ENCODE measurements at regions of chr1 and their contacts with region 1.

Region 1: GRCh38 chr1:6108937-6109614 is 63.4 kb downstream of the KCNAB2 start:
- DNase-seq: peak in 1 of 2 experiments; percentile 41
- H3K4me3 ChIP-seq: no peak overlapping the region
- H3K27ac ChIP-seq: no peak overlapping the region
- H3K4me1 ChIP-seq: peaks cover 0 to 4% (median 3%) of the 10 kb centered on the region in 4 experiments; a peak in 2 of 7 replicates
- H3K27me3 ChIP-seq: no peaks in the 10 kb centered on the region; a peak in 1 of 7 replicates
- CTCF ChIP-seq: peak; percentile 61 to 77 (median 68)
- EP300 ChIP-seq: no peak
- POLR2A ChIP-seq: no peak
- RAD21 ChIP-seq: peak; percentile 79 to 83

Region 2: DNA sequence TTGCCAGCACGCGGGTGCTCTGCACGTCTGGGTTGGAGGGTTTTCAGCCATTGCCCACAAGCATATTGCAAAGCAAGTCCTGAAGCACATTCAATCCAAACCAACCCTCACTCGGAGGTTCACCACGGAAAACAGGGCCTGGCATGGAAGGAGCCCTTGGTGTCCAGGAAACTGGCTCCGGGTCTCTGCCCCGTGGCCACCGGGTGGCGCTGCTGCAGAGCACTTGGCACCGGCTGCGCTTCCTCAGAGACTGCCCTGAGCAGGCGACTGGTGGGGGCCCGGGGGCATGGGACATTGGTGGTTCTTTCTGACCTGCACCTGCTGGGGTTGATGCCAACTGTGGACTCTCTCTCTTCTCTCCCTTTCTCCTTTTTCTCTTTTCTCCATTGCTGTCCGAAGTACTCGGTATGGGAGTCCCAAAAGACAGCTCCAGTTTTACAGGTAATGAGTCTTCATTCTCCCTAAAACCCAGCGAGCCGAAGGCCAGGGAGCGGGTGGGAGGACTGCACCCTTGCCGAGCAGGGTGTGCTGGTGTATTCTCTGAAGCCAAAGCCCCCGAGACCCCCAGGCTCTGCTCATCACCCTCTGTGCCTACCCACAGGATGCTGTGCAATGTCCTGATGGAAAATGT is 67.5 kb before region 1 on chr1:
- CTCF ChIA-PET with region 1: interaction called, 14 read pairs
- POLR2A ChIA-PET with region 1: no interaction called
- DNase-seq: peak in 1 of 2 experiments; percentile 92
- H3K4me3 ChIP-seq: no peak overlapping the region
- H3K27ac ChIP-seq: no peak overlapping the region
- H3K4me1 ChIP-seq: peaks cover 0 to 5% (median 3%) of the 10 kb centered on the region in 4 experiments; a peak in 3 of 7 replicates
- H3K27me3 ChIP-seq: no peaks in the 10 kb centered on the region; a peak in 1 of 7 replicates
- CTCF ChIP-seq: peak in 2 of 3 experiments; percentile 94 to 96; a peak in 3 of 4 replicates
- EP300 ChIP-seq: no peak
- POLR2A ChIP-seq: no peak
- RAD21 ChIP-seq: peak; percentile 88 to 92

Region 3: GRCh38 chr1:6082430-6082971 is 26.6 kb before region 1 on chr1:
- CTCF ChIA-PET with region 1: interaction called, 10 read pairs
- POLR2A ChIA-PET with region 1: no interaction called
- DNase-seq: no peak
- H3K4me3 ChIP-seq: no peak overlapping the region
- H3K27ac ChIP-seq: no peak overlapping the region
- H3K4me1 ChIP-seq: peaks cover 0 to 5% (median 2%) of the 10 kb centered on the region in 4 experiments; a peak in 3 of 7 replicates
- H3K27me3 ChIP-seq: 0 out of 7 replicates have a peak, but pooled peaks cover 0 to 2% (median 0%) of the 10 kb centered on the region in 4 experiments
- CTCF ChIP-seq: peak; percentile 44 to 55 (median 55)
- EP300 ChIP-seq: no peak
- POLR2A ChIP-seq: no peak
- RAD21 ChIP-seq: peak; percentile 30 to 46; a peak in 3 of 4 replicates

Region 4: DNA sequence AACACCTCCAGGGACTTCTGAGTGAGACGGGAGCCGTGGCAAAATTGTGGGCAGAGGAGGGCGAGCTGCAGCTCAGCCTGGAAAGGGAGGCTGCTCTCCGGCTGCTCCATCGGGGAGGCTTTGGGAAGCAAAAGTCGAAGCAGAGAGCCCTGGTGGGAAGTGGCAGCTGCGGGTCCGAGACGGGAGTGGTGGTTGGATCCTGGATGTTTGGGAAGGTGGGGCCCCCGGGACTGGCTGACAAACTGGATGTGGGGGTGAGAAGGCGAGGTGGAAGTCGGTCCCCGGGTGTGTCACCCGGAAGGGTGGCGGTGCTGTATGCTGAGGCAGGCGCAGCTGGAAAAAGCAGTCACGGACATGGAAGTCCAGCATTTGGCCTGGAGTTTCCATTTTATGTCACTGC is 11.3 kb before region 1 on chr1:
- CTCF ChIA-PET with region 1: interaction called, 17 read pairs
- POLR2A ChIA-PET with region 1: no interaction called
- DNase-seq: no peak
- H3K4me3 ChIP-seq: no peak overlapping the region
- H3K27ac ChIP-seq: no peak overlapping the region
- H3K4me1 ChIP-seq: no peaks in the 10 kb centered on the region; a peak in 2 of 7 replicates
- H3K27me3 ChIP-seq: no peaks in the 10 kb centered on the region
- CTCF ChIP-seq: no peak
- EP300 ChIP-seq: no peak
- POLR2A ChIP-seq: no peak
- RAD21 ChIP-seq: no peak

Region 5: DNA sequence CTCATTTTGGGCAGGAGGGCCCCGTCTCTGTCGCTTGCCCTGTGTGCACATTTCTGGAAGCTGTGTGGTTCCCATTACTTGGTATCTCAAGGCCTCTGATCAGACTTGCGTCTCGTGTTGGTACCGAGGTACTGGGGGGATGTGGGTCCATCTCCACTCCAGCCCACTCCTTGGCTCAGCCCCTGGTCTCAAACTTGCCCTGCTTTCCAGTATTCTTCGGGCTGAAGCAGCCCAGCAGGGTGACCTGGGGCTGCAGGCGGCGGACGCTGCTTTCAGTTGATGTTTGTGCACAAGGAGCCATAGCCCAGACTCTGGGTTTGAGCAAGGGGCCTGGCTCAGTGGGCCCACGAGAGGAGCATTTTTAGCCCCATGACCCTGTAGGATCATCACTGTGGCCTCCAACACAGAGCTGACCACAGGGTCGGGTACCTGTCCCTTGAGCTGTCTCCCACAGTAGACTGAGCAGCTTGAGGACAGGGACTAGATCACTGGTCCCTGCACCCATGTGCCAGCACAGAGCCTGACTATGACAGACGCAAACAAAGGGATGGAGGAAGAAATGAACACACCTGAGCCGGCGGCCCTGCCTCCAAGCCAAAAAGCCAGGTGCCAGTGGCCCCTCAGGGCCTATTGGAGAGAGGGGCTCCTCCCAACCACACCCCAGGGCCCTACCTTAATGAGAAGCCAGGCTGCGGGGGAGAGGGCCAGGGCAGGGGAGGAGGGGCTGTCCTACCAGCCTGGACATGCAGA is 24.2 kb after region 1 on chr1:
- CTCF ChIA-PET with region 1: interaction called, 11 read pairs
- POLR2A ChIA-PET with region 1: interaction called, 3 read pairs
- DNase-seq: no peak
- H3K4me3 ChIP-seq: no peak overlapping the region
- H3K27ac ChIP-seq: no peak overlapping the region
- H3K4me1 ChIP-seq: peaks cover 0 to 2% (median 0%) of the 10 kb centered on the region in 4 experiments; a peak in 1 of 7 replicates
- H3K27me3 ChIP-seq: peaks cover 0 to 7% (median 5%) of the 10 kb centered on the region in 4 experiments; a peak in 5 of 7 replicates
- CTCF ChIP-seq: no peak
- EP300 ChIP-seq: no peak
- POLR2A ChIP-seq: no peak
- RAD21 ChIP-seq: no peak

Region 6: GRCh38 chr1:6154525-6155319 is 45.6 kb after region 1 on chr1:
- CTCF ChIA-PET with region 1: interaction called, 10 read pairs
- POLR2A ChIA-PET with region 1: interaction called, 4 read pairs
- DNase-seq: no peak
- H3K4me3 ChIP-seq: no peak overlapping the region
- H3K27ac ChIP-seq: no peak overlapping the region
- H3K4me1 ChIP-seq: peaks cover 0 to 10% (median 0%) of the 10 kb centered on the region in 4 experiments; a peak in 1 of 7 replicates
- H3K27me3 ChIP-seq: peaks cover 0 to 2% (median 0%) of the 10 kb centered on the region in 4 experiments; a peak in 3 of 7 replicates
- CTCF ChIP-seq: peak in 1 of 3 experiments; percentile 9; a peak in 1 of 4 replicates
- EP300 ChIP-seq: no peak
- POLR2A ChIP-seq: no peak
- RAD21 ChIP-seq: no peak

Region 7: DNA sequence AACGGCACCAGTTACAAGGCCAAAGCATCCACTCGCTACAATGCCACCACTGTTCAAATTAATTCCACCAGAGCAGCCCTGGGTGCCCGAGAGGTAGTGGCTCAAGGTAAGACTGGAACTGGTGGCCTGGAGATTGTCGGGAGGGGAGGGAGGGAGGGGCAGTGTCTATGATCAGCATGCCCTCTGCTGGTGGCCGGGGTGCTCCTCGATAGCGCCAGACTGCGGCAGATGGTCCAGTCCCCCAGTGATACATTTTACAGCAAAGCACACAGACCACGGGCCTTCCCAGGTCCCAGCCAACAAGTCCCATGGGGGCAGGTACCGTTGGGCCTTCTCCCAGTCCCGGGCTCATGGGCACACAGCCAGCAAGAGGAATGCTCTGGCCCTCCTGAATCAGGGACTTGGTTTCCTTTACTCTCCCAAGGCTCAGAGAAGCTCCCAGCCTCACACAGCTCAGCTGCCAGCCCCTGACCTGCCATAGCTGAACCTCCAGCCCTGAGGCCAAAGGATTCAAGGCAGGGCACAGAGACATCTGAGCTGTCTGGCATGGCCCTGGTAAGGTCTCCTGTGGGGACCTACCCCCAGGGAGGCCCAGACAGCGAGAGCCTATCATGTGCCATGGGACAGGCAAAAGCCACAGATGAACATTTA is 269.1 kb after region 1 on chr1:
- CTCF ChIA-PET with region 1: no interaction called
- POLR2A ChIA-PET with region 1: no interaction called
- DNase-seq: no peak
- H3K4me3 ChIP-seq: no peak overlapping the region
- H3K27ac ChIP-seq: no peak overlapping the region
- H3K4me1 ChIP-seq: peaks cover 0 to 2% (median 0%) of the 10 kb centered on the region in 4 experiments; a peak in 2 of 7 replicates
- H3K27me3 ChIP-seq: no peaks in the 10 kb centered on the region
- CTCF ChIP-seq: peak; percentile 44 to 77 (median 48)
- EP300 ChIP-seq: no peak
- POLR2A ChIP-seq: no peak
- RAD21 ChIP-seq: peak; percentile 13 to 28; a peak in 2 of 4 replicates

Measured in H1 (cell line).